HEK293 (cell line): ENCODE measurements at regions of chr5 and their contacts with region 1.

Region 1: GRCh38 chr5:141664732-141665461 is 13.7 kb upstream of the FCHSD1 start:
- H3K4me3 ChIP-seq: no peak overlapping the region
- H3K27ac ChIP-seq: no peak overlapping the region
- H3K4me1 ChIP-seq: no peaks in the 10 kb centered on the region
- CTCF ChIP-seq: peak; percentile 42

Region 2: DNA sequence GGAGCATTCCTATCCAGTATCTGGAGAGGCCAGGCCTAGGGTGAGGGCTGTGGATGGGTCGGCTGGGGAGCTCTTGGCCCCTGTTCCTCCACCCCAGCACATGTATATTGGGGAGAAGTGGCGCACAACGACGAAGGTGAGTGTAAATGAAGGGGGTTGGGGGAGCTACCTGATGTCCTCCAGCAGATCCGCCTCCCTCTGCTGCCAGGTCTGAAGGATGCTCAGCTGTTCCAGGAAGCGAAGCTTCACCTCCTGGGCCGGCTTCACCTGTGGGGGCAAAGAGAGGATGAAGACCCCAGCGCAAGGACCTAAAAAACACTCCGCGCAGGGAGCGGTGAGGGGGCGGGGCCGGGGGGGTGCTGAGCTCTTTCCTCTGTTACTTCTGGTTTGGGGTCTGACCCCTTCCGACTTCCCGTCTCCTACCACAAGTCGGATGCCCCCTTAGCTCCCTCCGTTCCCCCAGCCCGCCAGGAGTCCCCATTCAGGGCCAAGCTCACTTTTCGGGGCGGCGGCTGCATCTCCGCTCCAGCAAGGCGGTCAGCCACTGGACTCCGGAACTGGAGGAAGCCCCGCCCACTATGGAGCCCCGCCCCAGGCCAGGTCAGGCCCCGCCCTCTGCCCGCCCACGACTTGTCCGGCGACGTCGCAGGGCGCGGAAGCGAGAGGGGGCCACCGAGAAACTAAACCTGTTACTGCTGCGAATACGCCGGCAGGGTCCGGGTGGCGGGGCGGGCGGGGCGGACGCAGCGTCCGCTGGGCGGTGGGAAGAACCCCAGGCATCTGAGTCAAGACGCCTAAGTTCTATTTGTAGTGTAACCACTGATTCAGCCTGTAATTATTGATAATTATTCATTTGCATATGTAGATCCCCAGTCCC is 13.8 kb before region 1 on chr5 and contains the start of gene FCHSD1:
- CTCF ChIA-PET with region 1: interaction called, 17 read pairs
- POLR2A ChIA-PET with region 1: no interaction called
- H3K4me3 ChIP-seq: peak within 1 kb of the TSS; percentile 52
- H3K27ac ChIP-seq: no peak within 1 kb of the TSS
- H3K4me1 ChIP-seq: no peaks in the 10 kb centered on the region
- CTCF ChIP-seq: no peak

Region 3: GRCh38 chr5:141681695-141682641 is 17.1 kb after region 1 on chr5 and contains the start of gene ARAP3:
- CTCF ChIA-PET with region 1: interaction called, 17 read pairs
- POLR2A ChIA-PET with region 1: no interaction called
- H3K4me3 ChIP-seq: peak within 1 kb of the TSS; percentile 52
- H3K27ac ChIP-seq: peak within 1 kb of the TSS; percentile 52; the same call in 1 of the 2 replicates
- H3K4me1 ChIP-seq: no peaks in the 10 kb centered on the region
- CTCF ChIP-seq: no peak

Region 4: GRCh38 chr5:141968914-141969608 is 304.2 kb after region 1 on chr5 and contains the start of gene RNF14:
- CTCF ChIA-PET with region 1: interaction called, 13 read pairs
- POLR2A ChIA-PET with region 1: no interaction called
- H3K4me3 ChIP-seq: peak within 1 kb of the TSS; percentile 93
- H3K27ac ChIP-seq: peak within 1 kb of the TSS; percentile 74
- H3K4me1 ChIP-seq: peaks cover 6% of the 10 kb centered on the region
- CTCF ChIP-seq: peak; percentile 91